PC-9 (cell line): ENCODE measurements at regions of chr6 and their contacts with region 1.

Region 1: DNA sequence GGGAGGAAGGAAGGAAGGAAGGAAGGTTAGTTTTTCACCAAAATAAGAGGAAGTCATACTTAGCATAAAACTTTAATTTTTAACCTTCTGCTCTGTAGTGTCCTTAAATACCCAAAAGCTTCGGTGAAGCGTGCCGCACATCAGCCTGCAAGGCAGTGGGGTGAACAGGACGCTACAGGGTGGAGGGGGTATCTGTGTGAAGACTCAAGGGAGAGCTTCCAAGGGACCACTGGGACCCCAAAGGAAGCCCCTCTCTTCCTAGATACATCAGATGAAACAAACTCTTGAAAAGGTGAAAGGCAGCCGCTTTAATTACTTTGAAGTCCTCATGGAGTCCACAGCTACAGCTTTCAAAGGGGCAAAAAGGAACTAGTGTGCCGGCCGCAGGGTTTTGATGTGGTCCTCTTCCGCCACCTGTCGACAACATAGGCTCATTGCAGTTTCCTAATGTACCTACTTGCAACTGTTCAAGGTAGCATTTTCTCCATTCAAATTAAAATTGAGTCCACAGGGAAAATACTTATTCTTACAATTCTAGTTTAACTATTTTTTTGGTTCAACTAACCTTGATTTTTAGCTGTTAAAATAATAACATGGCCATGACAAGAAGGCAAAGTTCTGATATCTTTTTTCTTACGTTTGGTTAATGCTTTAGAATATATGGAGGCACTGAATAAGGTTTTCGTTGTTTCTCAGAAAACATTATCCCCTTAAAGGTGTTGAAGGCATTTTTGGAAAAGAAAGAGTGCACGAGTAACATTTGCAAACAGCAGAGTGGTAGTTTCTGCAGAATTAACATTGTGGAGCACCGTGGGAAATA is 135.0 kb upstream of the RIPOR2 start:
- DNase-seq: peak; percentile 67 to 76
- H3K4me3 ChIP-seq: no peak overlapping the region
- H3K27ac ChIP-seq: no peak overlapping the region
- H3K4me1 ChIP-seq: no peaks in the 10 kb centered on the region
- H3K27me3 ChIP-seq: no peaks in the 10 kb centered on the region
- CTCF ChIP-seq: peak; percentile 94

Region 2: GRCh38 chr6:24283043-24283985 is 787.4 kb before region 1 on chr6:
- CTCF ChIA-PET with region 1: no interaction called
- POLR2A ChIA-PET with region 1: no interaction called
- intact Hi-C with region 1: loop called (anchors 5 kb)
- DNase-seq: peak; percentile 71 to 80
- H3K4me3 ChIP-seq: peak overlapping the region; percentile 6; the same call in 1 of the 2 replicates
- H3K27ac ChIP-seq: no peak overlapping the region
- H3K4me1 ChIP-seq: peaks cover 6% of the 10 kb centered on the region
- H3K27me3 ChIP-seq: no peaks in the 10 kb centered on the region
- CTCF ChIP-seq: peak; percentile 89

Region 3: DNA sequence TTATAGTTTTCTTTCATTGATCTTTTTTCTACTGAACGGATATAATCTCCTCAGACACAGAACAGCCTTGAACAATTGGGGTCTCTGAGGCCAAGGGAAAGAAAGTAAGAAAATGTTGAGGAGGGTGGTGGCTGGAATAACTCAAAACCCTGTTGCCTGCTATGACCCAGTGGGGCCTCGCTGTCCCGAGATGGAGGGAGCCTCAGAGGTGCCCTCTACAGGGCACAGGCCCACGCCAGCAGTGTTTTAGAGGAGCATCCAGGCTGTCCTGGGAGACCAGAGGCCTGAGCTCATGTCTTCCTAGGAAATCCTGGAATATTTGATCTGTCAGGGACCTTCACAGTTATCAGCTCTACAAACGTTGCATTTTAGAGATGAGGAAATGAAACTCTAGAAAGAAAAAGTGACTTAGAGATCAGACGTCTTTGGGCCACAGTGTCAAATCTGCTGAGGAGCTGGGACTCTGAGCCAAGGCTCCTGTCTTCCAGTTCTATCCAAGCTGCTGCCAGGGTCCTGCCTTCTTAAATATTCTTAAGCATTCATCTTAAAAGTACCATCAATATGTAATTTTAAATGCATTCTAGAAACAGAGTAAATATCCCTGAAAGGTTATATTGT is 549.7 kb before region 1 on chr6:
- CTCF ChIA-PET with region 1: no interaction called
- POLR2A ChIA-PET with region 1: no interaction called
- intact Hi-C with region 1: loop called (anchors 1 kb)
- DNase-seq: peak in 1 of 2 experiments; percentile 55
- H3K4me3 ChIP-seq: no peak overlapping the region
- H3K27ac ChIP-seq: no peak overlapping the region
- H3K4me1 ChIP-seq: no peaks in the 10 kb centered on the region
- H3K27me3 ChIP-seq: no peaks in the 10 kb centered on the region
- CTCF ChIP-seq: peak; percentile 72

Region 4: DNA sequence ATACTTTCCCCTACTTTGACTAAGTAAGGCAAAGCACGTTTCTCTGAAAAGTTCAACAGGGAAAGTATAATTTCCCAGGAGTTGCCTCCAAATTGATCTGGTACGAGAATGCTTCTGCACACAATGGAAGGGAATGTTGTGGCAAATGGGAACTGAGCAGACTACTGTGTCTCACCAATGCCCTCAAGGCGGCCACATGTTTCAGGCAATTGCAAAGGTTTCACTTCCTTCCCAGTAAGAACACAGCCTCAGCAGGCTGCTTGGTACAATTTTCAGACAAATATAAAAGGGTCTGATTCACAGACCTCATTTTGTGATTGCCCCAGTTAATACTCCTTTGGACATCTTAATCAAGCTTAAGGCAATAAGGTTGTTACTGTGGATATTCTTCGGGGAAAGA is 495.9 kb before region 1 on chr6:
- CTCF ChIA-PET with region 1: no interaction called
- POLR2A ChIA-PET with region 1: no interaction called
- intact Hi-C with region 1: no loop called
- DNase-seq: no peak
- H3K4me3 ChIP-seq: no peak overlapping the region
- H3K27ac ChIP-seq: no peak overlapping the region
- H3K4me1 ChIP-seq: no peaks in the 10 kb centered on the region
- H3K27me3 ChIP-seq: no peaks in the 10 kb centered on the region
- CTCF ChIP-seq: no peak

Region 5: DNA sequence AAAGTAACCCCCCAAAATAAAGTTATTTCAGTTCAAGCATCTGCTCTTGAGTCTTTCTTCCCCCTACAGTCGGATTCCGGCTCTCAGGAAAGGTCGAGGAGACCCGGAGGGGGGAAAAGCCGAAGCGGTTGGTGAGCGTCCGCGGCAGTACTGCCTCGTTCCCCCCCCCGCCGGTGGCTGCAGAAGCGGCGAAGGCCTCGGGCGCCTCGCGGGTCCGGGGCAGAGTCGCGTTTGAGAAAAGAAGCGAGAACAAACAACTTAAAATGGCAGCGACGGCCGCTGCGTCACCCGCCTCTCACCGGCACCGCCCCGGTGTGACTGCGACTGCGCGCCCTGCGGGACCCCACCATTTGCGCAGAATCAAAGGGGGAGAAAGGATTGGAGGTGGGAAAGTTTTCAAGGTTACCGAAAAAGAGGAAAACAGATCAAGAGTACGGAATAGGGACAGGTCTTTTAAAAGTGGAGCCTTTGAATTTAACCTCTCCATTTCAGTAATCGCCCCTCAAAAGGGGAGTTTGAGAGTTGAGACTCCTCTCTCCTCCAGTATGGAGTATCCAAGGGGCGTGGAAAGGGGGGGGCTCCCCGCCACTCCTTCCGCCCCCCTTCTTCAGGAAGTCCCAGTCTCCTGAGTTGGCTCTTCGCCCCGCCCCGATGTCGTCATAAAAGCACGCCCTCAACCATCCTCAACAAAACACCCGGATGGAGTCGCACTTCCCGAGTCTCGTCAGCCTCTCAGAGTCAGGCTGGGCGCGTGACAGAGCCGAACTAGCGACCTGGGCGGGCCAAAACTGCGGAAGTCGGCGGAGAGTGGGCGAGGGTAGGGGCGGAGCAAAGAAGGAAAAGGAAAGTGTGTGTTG is 349.9 kb before region 1 on chr6:
- CTCF ChIA-PET with region 1: no interaction called
- POLR2A ChIA-PET with region 1: no interaction called
- intact Hi-C with region 1: loop called (anchors 1 kb)
- DNase-seq: peak; percentile 99 to 100
- H3K4me3 ChIP-seq: peak overlapping the region; percentile 95
- H3K27ac ChIP-seq: peak overlapping the region; percentile 93
- H3K4me1 ChIP-seq: peaks cover 42% of the 10 kb centered on the region
- H3K27me3 ChIP-seq: no peaks in the 10 kb centered on the region
- CTCF ChIP-seq: no peak

Region 6: GRCh38 chr6:24855395-24856245 is 215.1 kb before region 1 on chr6:
- CTCF ChIA-PET with region 1: interaction called, 7 read pairs
- POLR2A ChIA-PET with region 1: no interaction called
- intact Hi-C with region 1: loop called (anchors 1 kb)
- DNase-seq: peak; percentile 44 to 58
- H3K4me3 ChIP-seq: no peak overlapping the region
- H3K27ac ChIP-seq: no peak overlapping the region
- H3K4me1 ChIP-seq: peaks cover 26% of the 10 kb centered on the region
- H3K27me3 ChIP-seq: no peaks in the 10 kb centered on the region
- CTCF ChIP-seq: peak; percentile 89

Region 7: GRCh38 chr6:25035527-25036435 is 35.0 kb before region 1 on chr6:
- CTCF ChIA-PET with region 1: no interaction called
- POLR2A ChIA-PET with region 1: no interaction called
- intact Hi-C with region 1: no loop called
- DNase-seq: peak; percentile 44 to 61
- H3K4me3 ChIP-seq: no peak overlapping the region
- H3K27ac ChIP-seq: no peak overlapping the region; the same call in 1 of the 2 replicates
- H3K4me1 ChIP-seq: no peaks in the 10 kb centered on the region
- H3K27me3 ChIP-seq: no peaks in the 10 kb centered on the region
- CTCF ChIP-seq: no peak

Region 8: GRCh38 chr6:25173951-25174474 is 103.3 kb after region 1 on chr6:
- CTCF ChIA-PET with region 1: interaction called, 4 read pairs
- POLR2A ChIA-PET with region 1: no interaction called
- intact Hi-C with region 1: loop called (anchors 10 kb)
- DNase-seq: peak; percentile 66 to 98
- H3K4me3 ChIP-seq: no peak overlapping the region
- H3K27ac ChIP-seq: peak overlapping the region; percentile 98
- H3K4me1 ChIP-seq: peaks cover 56% of the 10 kb centered on the region
- H3K27me3 ChIP-seq: no peaks in the 10 kb centered on the region
- CTCF ChIP-seq: no peak